MCF 10A (cell line): ENCODE measurements at regions of chr20 and their contacts with region 1.

Region 1: GRCh38 chr20:40563296-40563944 is 125.6 kb downstream of the MAFB start:
- DNase-seq: peak; percentile 97
- H3K4me3 Mint-ChIP-seq: peak overlapping the region; percentile 2
- H3K27ac Mint-ChIP-seq: peak overlapping the region; percentile 81
- H3K4me1 Mint-ChIP-seq: peaks cover 40% of the 10 kb centered on the region
- H3K27me3 Mint-ChIP-seq: no peaks in the 10 kb centered on the region
- CTCF ChIP-seq: no peak

Region 2: DNA sequence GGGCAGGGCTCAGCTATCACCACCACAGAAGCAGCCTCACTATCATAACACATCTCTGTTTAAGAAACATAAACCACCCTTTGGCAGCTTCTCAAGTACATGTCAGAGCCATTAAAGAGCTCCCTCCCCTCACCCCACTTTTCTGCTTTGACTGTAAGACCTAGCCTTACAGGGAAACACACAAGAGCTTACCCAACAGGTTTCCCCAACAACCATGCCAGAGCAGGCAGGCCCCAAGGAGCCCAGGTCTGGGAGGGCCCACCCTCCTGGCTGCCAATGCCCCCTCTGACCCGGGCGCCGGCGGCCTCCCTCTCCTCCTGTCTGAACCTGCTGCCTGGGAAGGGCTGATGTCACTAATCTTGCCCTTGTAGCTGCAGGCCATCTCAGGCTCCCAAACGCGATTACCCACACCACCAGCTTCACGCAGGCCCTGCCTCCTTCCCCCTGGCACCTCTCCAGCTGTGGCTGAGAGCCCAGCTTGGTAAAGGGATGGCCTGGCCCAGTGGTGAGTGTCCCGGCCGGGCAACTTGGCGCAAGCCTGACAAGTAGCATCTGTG is 276.4 kb before region 1 on chr20:
- CTCF ChIA-PET with region 1: interaction called, 14 read pairs
- POLR2A ChIA-PET with region 1: interaction called, 23 read pairs
- intact Hi-C with region 1: no loop called
- DNase-seq: peak; percentile 98
- H3K4me3 Mint-ChIP-seq: peak overlapping the region; percentile 40
- H3K27ac Mint-ChIP-seq: peak overlapping the region; percentile 92
- H3K4me1 Mint-ChIP-seq: peaks cover 36% of the 10 kb centered on the region
- H3K27me3 Mint-ChIP-seq: no peaks in the 10 kb centered on the region
- CTCF ChIP-seq: no peak

Region 3: GRCh38 chr20:40551125-40551530 is 12.3 kb before region 1 on chr20:
- CTCF ChIA-PET with region 1: interaction called, 6 read pairs
- POLR2A ChIA-PET with region 1: interaction called, 14 read pairs
- intact Hi-C with region 1: no loop called
- DNase-seq: peak; percentile 47
- H3K4me3 Mint-ChIP-seq: no peak overlapping the region
- H3K27ac Mint-ChIP-seq: no peak overlapping the region
- H3K4me1 Mint-ChIP-seq: peaks cover 9% of the 10 kb centered on the region
- H3K27me3 Mint-ChIP-seq: no peaks in the 10 kb centered on the region
- CTCF ChIP-seq: no peak

Region 4: DNA sequence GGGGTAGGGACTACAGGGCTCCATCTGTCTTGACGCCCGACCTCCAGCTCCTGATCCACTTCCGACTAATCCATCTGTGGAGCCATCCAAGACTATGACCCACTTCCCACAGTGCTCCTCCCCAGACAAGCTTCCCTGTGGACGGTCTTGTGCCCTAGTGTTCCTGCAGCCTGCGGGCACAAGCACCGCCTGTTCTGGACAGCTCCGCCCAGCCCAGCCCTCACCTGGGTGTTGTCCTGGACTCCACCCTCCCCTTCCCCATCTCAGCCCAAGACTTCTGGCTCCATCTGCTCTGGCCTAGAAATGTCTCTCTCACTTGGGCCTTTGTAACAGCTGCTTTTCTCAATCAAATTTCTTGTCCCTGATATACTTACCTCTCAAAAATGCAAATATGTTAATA is 23.6 kb after region 1 on chr20:
- CTCF ChIA-PET with region 1: interaction called, 6 read pairs
- POLR2A ChIA-PET with region 1: interaction called, 14 read pairs
- intact Hi-C with region 1: no loop called
- DNase-seq: peak; percentile 16
- H3K4me3 Mint-ChIP-seq: no peak overlapping the region
- H3K27ac Mint-ChIP-seq: peak overlapping the region; percentile 10
- H3K4me1 Mint-ChIP-seq: peaks cover 30% of the 10 kb centered on the region
- H3K27me3 Mint-ChIP-seq: no peaks in the 10 kb centered on the region
- CTCF ChIP-seq: no peak

Region 5: GRCh38 chr20:40628877-40629276 is 65.5 kb after region 1 on chr20:
- CTCF ChIA-PET with region 1: interaction called, 6 read pairs
- POLR2A ChIA-PET with region 1: interaction called, 15 read pairs
- intact Hi-C with region 1: no loop called
- DNase-seq: peak; percentile 84
- H3K4me3 Mint-ChIP-seq: no peak overlapping the region
- H3K27ac Mint-ChIP-seq: peak overlapping the region; percentile 80
- H3K4me1 Mint-ChIP-seq: peaks cover 54% of the 10 kb centered on the region
- H3K27me3 Mint-ChIP-seq: no peaks in the 10 kb centered on the region
- CTCF ChIP-seq: no peak

Region 6: GRCh38 chr20:40821429-40821828 is 258.0 kb after region 1 on chr20:
- CTCF ChIA-PET with region 1: no interaction called
- POLR2A ChIA-PET with region 1: no interaction called
- intact Hi-C with region 1: no loop called
- DNase-seq: no peak
- H3K4me3 Mint-ChIP-seq: no peak overlapping the region
- H3K27ac Mint-ChIP-seq: no peak overlapping the region
- H3K4me1 Mint-ChIP-seq: no peaks in the 10 kb centered on the region
- H3K27me3 Mint-ChIP-seq: no peaks in the 10 kb centered on the region
- CTCF ChIP-seq: no peak

Region 7: DNA sequence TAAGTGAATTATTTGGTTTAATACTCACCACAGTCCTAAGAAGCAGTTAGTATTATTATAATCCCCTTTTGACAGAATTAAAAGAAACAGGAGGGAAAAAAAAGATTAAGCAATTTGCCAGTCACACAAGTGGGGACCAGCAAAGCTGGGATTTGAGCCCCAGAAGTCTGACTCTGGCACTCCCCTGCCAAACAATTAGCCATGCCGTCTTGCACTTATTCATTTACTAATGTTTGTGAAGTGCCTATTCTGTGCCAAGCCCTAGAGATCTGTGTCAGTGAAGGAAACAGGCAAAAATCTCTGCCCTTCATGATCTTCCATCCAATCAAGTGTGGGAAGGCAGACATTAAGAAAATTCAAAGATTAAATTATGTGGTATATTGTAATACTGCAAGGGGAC is 339.2 kb after region 1 on chr20:
- CTCF ChIA-PET with region 1: no interaction called
- POLR2A ChIA-PET with region 1: no interaction called
- intact Hi-C with region 1: no loop called
- DNase-seq: no peak
- H3K4me3 Mint-ChIP-seq: no peak overlapping the region
- H3K27ac Mint-ChIP-seq: no peak overlapping the region
- H3K4me1 Mint-ChIP-seq: no peaks in the 10 kb centered on the region
- H3K27me3 Mint-ChIP-seq: no peaks in the 10 kb centered on the region
- CTCF ChIP-seq: no peak